Activated naive CD4-positive, alpha-beta T cell treated with anti-CD3 and anti-CD28 coated beads for 36 hours (primary cell): ENCODE measurements at regions of chr13 and their contacts with region 1.

Region 1: GRCh38 chr13:51632591-51633362 is 48.5 kb downstream of the WDFY2 start:
- DNase-seq: no peak
- H3K4me3 Mint-ChIP-seq: no peak overlapping the region
- H3K27ac Mint-ChIP-seq: no peak overlapping the region
- H3K4me1 Mint-ChIP-seq: peaks cover 57% of the 10 kb centered on the region
- H3K27me3 Mint-ChIP-seq: no peaks in the 10 kb centered on the region

Region 2: GRCh38 chr13:51764184-51765141 is 131.7 kb after region 1 on chr13:
- CTCF ChIA-PET with region 1: no interaction called
- intact Hi-C with region 1: loop called (anchors 1 kb)
- DNase-seq: peak; percentile 84
- H3K4me3 Mint-ChIP-seq: peak overlapping the region; percentile 73
- H3K27ac Mint-ChIP-seq: peak overlapping the region; percentile 82
- H3K4me1 Mint-ChIP-seq: peaks cover 35% of the 10 kb centered on the region
- H3K27me3 Mint-ChIP-seq: no peaks in the 10 kb centered on the region

Region 3: DNA sequence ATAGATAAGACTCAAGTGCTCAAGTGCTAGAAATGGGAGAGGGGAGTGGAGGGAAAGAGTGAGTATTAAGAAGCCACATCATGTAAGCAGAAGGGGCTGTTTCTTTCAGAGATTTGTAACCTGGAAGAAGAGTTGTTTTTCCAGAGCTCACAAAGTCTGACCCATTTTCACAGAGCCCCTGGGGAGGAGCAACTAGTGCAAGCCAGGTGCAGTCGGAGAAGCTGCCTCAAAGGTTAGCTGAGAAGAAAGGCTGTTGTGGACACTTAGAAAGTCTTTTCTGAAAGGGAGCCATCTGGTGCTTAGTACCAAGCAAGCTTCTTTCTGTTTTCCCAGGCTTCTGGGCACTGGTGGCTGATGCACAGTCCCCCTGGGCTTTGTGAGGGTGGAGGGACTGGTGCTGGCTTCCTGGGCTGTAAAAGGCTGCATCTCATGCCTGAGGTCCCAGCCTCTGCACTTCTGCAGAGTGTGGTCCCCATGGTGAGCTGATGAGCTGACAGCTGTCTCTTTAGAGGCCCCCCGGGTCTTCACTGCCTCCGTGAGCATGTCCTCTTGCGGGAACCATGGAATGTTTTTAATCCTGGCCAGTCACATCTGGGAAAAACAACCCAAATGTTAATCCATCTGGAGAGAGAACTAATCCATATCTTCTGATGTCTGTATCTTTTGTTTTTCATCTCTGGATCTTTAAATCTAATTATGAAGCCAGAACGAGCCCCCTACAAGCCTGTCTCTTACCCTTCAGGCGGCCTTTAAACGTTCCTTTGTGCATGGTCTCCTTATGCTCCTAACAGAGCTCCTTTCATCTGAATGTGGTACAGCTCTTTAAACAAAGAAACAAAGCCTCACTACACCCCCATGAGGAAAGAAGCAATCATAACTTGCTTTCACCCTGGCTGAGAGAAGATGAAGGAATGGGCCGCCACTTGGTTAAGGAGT is 1436.1 kb after region 1 on chr13:
- CTCF ChIA-PET with region 1: no interaction called
- intact Hi-C with region 1: no loop called
- DNase-seq: no peak
- H3K4me3 Mint-ChIP-seq: no peak overlapping the region
- H3K27ac Mint-ChIP-seq: no peak overlapping the region
- H3K4me1 Mint-ChIP-seq: no peaks in the 10 kb centered on the region
- H3K27me3 Mint-ChIP-seq: no peaks in the 10 kb centered on the region